PC-9 (cell line): ENCODE measurements at regions of chr3 and their contacts with region 1.

Region 1: DNA sequence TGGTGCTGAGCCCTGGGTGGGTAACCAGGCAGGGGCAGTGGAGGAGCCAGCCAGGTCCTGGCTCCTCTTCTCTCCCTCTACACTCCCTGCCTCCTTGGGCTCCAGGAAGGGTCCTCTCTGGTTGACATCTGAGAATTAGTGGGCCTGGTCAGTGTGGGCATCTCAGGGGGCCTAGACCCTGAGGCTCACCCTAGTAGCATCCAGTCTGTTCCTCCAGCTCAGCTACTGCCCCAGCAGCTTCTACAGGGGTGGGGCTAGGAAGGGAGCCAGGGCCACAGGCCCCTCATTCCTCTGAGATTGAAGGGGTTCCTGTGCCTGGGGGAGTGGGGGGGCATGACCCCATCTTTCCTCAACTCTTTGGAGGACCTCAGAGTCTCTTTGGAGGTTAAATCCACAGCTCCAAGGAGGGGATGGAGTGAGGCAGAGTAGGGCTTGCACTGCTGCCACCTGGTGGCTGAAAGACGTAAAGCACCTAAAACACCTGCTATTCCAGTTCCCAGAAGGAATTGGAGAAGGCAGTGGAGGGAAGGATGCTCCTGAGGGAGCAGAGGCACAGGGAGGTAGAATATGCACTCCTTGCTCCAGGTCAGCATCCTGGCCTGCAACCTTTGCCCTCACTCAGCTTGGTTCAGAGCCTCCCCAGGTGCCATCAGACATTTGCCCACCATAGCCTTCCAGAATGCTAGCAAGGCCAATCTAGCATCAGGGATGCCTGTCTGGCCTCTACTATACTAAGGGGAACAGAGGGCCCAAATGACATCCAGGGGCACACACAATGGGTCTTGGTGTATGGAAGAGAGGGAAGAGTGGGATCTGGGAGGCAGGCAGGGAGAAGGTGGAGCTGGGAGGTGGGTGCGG is 25.1 kb downstream of the C3orf18 start:
- DNase-seq: peak; percentile 42 to 71
- H3K4me3 ChIP-seq: no peak overlapping the region
- H3K27ac ChIP-seq: no peak overlapping the region
- H3K4me1 ChIP-seq: no peaks in the 10 kb centered on the region
- H3K27me3 ChIP-seq: peaks cover 26% of the 10 kb centered on the region
- CTCF ChIP-seq: peak; percentile 83

Region 2: DNA sequence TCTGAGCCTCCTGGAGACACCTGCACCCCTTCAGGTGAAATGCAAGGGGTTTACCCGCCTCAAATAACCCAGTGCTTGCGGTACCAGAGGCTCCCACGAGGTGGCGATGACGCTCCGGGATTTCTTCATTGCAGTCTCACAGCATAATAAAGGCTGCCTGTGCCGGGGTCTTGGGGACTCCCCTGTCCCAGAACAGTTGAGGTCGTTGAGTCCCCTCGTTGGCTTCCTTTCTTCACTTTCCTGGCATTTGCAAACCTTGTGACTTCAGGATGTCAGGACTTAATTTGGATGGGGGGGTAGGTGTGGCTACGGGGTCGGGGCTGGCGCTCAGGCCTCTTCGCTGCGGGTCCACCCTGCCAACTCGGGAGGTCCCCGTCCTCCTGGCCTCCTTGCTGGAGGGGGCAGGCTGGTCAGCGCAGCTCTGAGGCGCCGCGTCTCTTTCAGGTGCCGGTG is 349.7 kb before region 1 on chr3:
- CTCF ChIA-PET with region 1: no interaction called
- POLR2A ChIA-PET with region 1: no interaction called
- intact Hi-C with region 1: loop called (anchors 2 kb)
- DNase-seq: peak; percentile 47 to 78
- H3K4me3 ChIP-seq: no peak overlapping the region
- H3K27ac ChIP-seq: no peak overlapping the region
- H3K4me1 ChIP-seq: 0 out of 2 replicates have a peak, but pooled peaks cover 7% of the 10 kb centered on the region
- H3K27me3 ChIP-seq: no peaks in the 10 kb centered on the region
- CTCF ChIP-seq: peak; percentile 91

Region 3: GRCh38 chr3:50350527-50351322 is 191.7 kb before region 1 on chr3 and contains the starts of genes CYB561D2 and NPRL2:
- CTCF ChIA-PET with region 1: interaction called, 6 read pairs
- POLR2A ChIA-PET with region 1: no interaction called
- intact Hi-C with region 1: loop called (anchors 1 kb)
- DNase-seq: peak; percentile 89 to 98
- H3K4me3 ChIP-seq: peak within 1 kb of the TSS; percentile 79
- H3K27ac ChIP-seq: 0 out of 2 replicates have a peak within 1 kb of the TSS, but pooled peaks have one; percentile 45
- H3K4me1 ChIP-seq: peaks cover 17% of the 10 kb centered on the region; the same call in 1 of the 2 replicates
- H3K27me3 ChIP-seq: no peaks in the 10 kb centered on the region
- CTCF ChIP-seq: no peak
- total RNA-seq, gene CYB561D2: 15.7 and 19.3 TPM in 2 replicates
- total RNA-seq, gene NPRL2: 24.1 and 25.4 TPM in 2 replicates

Region 4: DNA sequence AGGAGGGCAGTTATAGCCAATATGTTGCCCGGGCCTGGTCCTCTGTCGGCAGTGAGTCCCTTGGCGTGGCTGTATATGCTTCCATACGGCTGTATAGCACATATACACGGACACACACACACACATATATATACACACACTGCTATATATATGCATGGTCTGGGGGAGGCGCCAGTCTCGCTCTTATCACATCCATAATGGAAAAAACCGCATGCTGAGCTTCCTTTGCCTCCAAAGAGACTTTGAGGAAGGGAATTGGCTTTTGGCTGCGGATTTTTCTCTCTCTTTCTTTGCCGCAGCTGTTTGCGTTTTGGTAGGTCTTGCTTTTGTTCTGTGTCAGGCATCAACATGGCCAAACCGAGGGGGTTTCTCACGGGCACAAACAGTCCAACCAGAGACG is 171.8 kb before region 1 on chr3:
- CTCF ChIA-PET with region 1: interaction called, 7 read pairs
- POLR2A ChIA-PET with region 1: interaction called, 16 read pairs
- intact Hi-C with region 1: no loop called
- DNase-seq: peak in 1 of 2 experiments; percentile 30
- H3K4me3 ChIP-seq: no peak overlapping the region
- H3K27ac ChIP-seq: no peak overlapping the region
- H3K4me1 ChIP-seq: no peaks in the 10 kb centered on the region
- H3K27me3 ChIP-seq: peaks cover 29% of the 10 kb centered on the region
- CTCF ChIP-seq: peak; percentile 50; the same call in 1 of the 2 replicates

Region 5: GRCh38 chr3:50436114-50436674 is 106.2 kb before region 1 on chr3:
- CTCF ChIA-PET with region 1: no interaction called
- POLR2A ChIA-PET with region 1: no interaction called
- intact Hi-C with region 1: loop called (anchors 1 kb)
- DNase-seq: peak in 1 of 2 experiments; percentile 58
- H3K4me3 ChIP-seq: no peak overlapping the region
- H3K27ac ChIP-seq: no peak overlapping the region
- H3K4me1 ChIP-seq: no peaks in the 10 kb centered on the region
- H3K27me3 ChIP-seq: peaks cover 8% of the 10 kb centered on the region; the same call in 1 of the 2 replicates
- CTCF ChIP-seq: peak; percentile 81

Region 6: GRCh38 chr3:50450209-50450921 is 92.0 kb before region 1 on chr3:
- CTCF ChIA-PET with region 1: no interaction called
- POLR2A ChIA-PET with region 1: no interaction called
- intact Hi-C with region 1: no loop called
- DNase-seq: no peak
- H3K4me3 ChIP-seq: no peak overlapping the region
- H3K27ac ChIP-seq: no peak overlapping the region
- H3K4me1 ChIP-seq: no peaks in the 10 kb centered on the region
- H3K27me3 ChIP-seq: peaks cover 44% of the 10 kb centered on the region
- CTCF ChIP-seq: no peak

Region 7: GRCh38 chr3:50600841-50601591 is 58.6 kb after region 1 on chr3:
- CTCF ChIA-PET with region 1: interaction called, 16 read pairs
- POLR2A ChIA-PET with region 1: no interaction called
- intact Hi-C with region 1: no loop called
- DNase-seq: peak; percentile 76 to 81
- H3K4me3 ChIP-seq: no peak overlapping the region
- H3K27ac ChIP-seq: peak overlapping the region; percentile 39; the same call in 1 of the 2 replicates
- H3K4me1 ChIP-seq: peaks cover 38% of the 10 kb centered on the region
- H3K27me3 ChIP-seq: no peaks in the 10 kb centered on the region
- CTCF ChIP-seq: no peak

Region 8: GRCh38 chr3:50671331-50671730 is 128.9 kb after region 1 on chr3:
- CTCF ChIA-PET with region 1: no interaction called
- POLR2A ChIA-PET with region 1: no interaction called
- intact Hi-C with region 1: no loop called
- DNase-seq: peak; percentile 29 to 83
- H3K4me3 ChIP-seq: no peak overlapping the region
- H3K27ac ChIP-seq: no peak overlapping the region
- H3K4me1 ChIP-seq: peaks cover 17% of the 10 kb centered on the region
- H3K27me3 ChIP-seq: no peaks in the 10 kb centered on the region
- CTCF ChIP-seq: no peak

Region 9: DNA sequence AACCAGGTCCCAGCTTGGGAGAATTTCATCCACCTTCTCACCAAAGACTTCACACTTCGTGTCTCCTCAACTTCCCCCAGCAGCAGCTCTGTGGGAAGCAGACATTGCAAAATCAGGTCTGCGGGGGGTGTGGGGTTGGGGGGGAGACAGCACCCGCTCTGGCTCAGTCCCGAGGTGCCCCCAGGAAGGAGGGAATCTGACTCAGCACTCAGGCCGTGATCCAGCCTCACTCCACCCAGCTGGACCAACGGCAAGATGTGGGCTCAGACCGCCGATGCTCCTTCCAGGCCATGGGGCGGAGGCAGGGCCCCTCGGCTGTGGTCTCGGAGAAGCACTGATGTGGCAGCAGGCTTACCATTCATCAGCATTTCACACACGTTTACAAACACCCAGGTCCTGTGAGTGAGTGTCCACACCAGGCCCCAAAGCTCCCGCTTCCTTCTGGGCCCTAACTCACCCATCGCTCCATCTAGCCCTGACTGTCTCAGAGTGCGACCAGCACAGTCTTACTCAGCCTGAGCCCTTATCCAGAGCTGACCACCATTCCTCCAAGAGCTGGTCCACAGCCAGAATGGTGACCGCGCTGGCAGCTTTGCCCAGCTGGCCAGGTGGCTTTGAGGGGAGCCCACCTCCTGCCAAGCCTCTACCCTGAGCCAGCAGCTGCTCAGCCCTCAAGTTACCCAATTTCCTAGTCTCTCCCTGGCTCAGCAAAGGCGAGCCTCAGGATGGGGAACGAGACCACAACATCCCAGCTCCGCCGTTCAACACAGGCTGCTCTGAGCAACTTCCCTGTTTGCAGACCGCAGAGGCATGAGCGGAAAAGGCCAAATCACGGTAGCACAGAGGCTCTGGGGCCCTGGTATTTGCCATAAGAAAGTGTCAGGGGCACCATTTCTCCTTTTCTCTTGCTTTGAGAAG is 1956.0 kb after region 1 on chr3:
- CTCF ChIA-PET with region 1: interaction called, 11 read pairs
- POLR2A ChIA-PET with region 1: no interaction called
- intact Hi-C with region 1: no loop called
- DNase-seq: no peak
- H3K4me3 ChIP-seq: no peak overlapping the region
- H3K27ac ChIP-seq: no peak overlapping the region
- H3K4me1 ChIP-seq: no peaks in the 10 kb centered on the region
- H3K27me3 ChIP-seq: no peaks in the 10 kb centered on the region
- CTCF ChIP-seq: no peak